ENCODE measurements at regions of chr12 and their contacts with region 1.

Region 1: GRCh38 chr12:32106517-32107358 is at the start of gene BICD1:
- DNase-seq: peak; percentile 80 to 94 (median 90)
- H3K4me3 ChIP-seq: peak within 1 kb of the TSS; percentile 74 to 99 (median 92)
- H3K27ac ChIP-seq: peak within 1 kb of the TSS; percentile 56 to 97 (median 93)
- H3K27me3 ChIP-seq: no peaks in the 10 kb centered on the region
- CTCF ChIP-seq: peak in 54 of 56 donors; percentile 16 to 77 (median 50)
- total RNA-seq, gene BICD1: 52.6 to 94.5 (median 74.8) TPM

Region 2: DNA sequence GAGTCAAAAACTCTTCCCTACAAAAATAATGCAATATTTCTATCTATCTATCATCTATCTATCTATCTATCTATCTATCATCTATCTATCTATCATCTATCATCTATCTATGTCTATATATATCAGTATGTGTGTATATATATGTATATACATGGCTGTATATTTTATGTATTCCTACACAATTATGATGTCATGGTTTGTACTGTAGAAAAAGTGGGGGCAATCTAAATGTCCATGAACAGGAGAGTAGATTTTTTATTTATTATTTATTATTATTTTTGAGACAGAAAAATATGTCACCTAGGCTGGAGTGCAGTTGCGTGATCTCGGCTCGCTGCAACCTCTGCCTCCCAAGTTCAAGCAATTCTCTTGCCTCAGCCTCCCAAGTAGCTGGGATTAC is 45.7 kb before region 1 on chr12:
- intact Hi-C with region 1: loop called in 1 of 2 experiments (anchors 2 kb)
- DNase-seq: no peak
- H3K4me3 ChIP-seq: no peak overlapping the region
- H3K27ac ChIP-seq: no peak overlapping the region
- H3K27me3 ChIP-seq: no peaks in the 10 kb centered on the region
- CTCF ChIP-seq: no peak

Region 3: GRCh38 chr12:32139064-32139421 is 32.3 kb after region 1 on chr12:
- intact Hi-C with region 1: loop called in 1 of 2 experiments (anchors 2 kb)
- DNase-seq: no peak
- H3K4me3 ChIP-seq: peak overlapping the region; percentile 22 to 77 (median 57)
- H3K27ac ChIP-seq: peak overlapping the region in 52 of 59 donors; percentile 14 to 90 (median 72)
- H3K27me3 ChIP-seq: no peaks in the 10 kb centered on the region
- CTCF ChIP-seq: no peak

Region 4: DNA sequence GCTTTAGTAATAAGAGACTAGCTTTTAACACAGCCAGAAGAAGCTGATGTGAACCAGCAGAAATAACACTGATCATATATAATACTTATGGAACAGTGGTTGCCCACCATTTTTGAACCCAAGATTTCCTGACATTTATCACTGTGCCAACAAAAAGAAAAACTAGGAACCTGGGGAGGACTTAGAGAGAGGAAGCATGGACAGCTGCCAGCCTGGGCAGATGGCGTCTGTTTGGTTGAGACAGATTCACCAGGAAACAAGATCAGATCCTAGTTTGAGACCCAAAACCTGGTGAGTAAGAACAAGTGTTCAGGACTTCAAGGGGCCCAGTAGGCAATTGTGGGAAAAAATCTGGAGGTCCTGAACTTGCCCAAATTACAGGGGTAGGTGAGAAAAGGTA is 95.2 kb after region 1 on chr12:
- intact Hi-C with region 1: loop called in 1 of 2 experiments (anchors 5 kb)
- DNase-seq: peak in 7 of 10 donors; percentile 33 to 85 (median 47)
- H3K4me3 ChIP-seq: no peak overlapping the region
- H3K27ac ChIP-seq: peak overlapping the region in 2 of 59 donors; percentile 7 to 29
- H3K27me3 ChIP-seq: no peaks in the 10 kb centered on the region
- CTCF ChIP-seq: no peak

Region 5: GRCh38 chr12:32312049-32312670 is 205.4 kb after region 1 on chr12:
- intact Hi-C with region 1: loop called in 1 of 2 experiments (anchors 2 kb)
- DNase-seq: no peak
- H3K4me3 ChIP-seq: no peak overlapping the region
- H3K27ac ChIP-seq: peak overlapping the region in 1 of 59 donors; percentile 22
- H3K27me3 ChIP-seq: no peaks in the 10 kb centered on the region
- CTCF ChIP-seq: peak; percentile 19 to 79 (median 61)